ENCODE measurements at regions of chr3 and their contacts with region 1.

Region 1: DNA sequence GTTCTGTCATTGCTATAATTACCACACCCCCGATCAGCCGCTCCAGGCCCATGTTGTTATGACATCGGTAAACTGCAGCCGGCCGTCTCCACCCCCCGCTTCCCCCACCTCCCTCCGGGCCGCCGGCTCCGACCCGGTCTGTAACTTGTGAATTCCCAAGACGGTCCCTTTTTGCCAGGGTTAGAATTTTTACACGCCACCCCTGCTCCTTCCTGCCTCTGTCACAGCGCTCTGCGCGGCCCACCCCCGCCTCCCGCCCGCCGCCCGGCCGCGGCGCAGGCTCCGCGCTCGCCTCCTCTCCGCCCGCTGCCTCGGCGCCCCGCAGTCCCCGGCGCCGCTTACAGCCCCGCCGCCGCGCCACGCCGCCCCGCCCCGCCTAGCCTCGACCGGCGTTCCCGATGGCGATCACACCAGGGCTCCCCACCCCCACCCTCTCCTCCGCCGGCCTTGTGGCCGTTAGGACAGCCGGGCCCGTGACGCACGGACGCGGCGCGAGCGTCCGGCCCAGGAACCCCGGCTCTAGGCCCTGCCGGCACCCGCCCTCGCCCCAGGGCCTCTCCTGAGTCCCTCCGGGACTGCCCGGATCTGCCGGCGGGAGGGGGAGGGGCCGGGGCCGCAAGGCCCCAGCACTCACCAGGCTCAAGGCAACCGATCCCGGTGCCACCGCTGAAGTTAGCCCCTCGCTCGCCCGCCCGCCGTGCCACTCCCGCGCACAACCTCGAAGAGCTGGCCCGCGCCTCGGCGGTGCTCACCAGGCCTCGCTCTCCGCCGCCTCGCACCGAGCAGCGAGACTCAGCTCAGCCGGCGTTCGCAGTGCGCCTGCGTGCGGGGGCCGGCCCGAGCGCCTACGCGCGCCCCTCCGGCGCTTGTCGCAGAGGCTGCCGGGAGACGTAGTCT is at the start of gene KPNA1:
- DNase-seq: peak; percentile 88
- H3K4me3 ChIP-seq: peak within 1 kb of the TSS; percentile 81 to 87 (median 82)
- H3K27ac ChIP-seq: peak within 1 kb of the TSS; percentile 75
- H3K4me1 ChIP-seq: peaks cover 10% of the 10 kb centered on the region
- H3K27me3 ChIP-seq: no peaks in the 10 kb centered on the region
- CTCF ChIP-seq: no peak
- total RNA-seq, gene KPNA1: 70.0 to 95.3 TPM

Region 2: GRCh38 chr3:122484985-122485384 is 29.4 kb before region 1 on chr3:
- CTCF ChIA-PET with region 1: no interaction called
- dilution Hi-C with region 1: no loop called
- in situ Hi-C with region 1: no loop called
- intact Hi-C with region 1: loop called (anchors 2 kb)
- DNase-seq: peak; percentile 57
- H3K4me3 ChIP-seq: no peak overlapping the region
- H3K27ac ChIP-seq: peak overlapping the region; percentile 6
- H3K4me1 ChIP-seq: peaks cover 21% of the 10 kb centered on the region
- H3K27me3 ChIP-seq: no peaks in the 10 kb centered on the region
- CTCF ChIP-seq: no peak

Region 3: DNA sequence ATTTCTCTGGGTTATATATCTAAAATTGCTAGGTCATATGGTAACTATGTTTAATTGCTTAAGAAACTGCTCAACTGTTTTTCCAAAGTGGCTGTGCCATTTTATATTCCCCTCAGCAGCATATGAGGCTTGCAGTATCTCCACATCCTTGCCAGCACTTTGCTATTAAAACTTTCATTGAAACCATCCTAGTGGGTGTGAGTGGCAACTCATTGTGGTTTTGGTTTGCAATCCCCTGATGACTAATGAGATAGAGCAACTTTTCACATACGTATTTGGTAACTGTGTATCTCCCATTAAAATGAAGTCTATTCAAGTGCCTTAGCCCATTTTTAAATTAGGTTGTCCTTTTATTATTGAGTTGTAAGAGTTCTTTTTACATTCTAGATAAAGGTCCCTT is 16.9 kb before region 1 on chr3:
- CTCF ChIA-PET with region 1: no interaction called
- dilution Hi-C with region 1: no loop called
- in situ Hi-C with region 1: no loop called
- intact Hi-C with region 1: loop called (anchors 2 kb)
- DNase-seq: peak; percentile 95
- H3K4me3 ChIP-seq: no peak overlapping the region
- H3K27ac ChIP-seq: peak overlapping the region; percentile 72
- H3K4me1 ChIP-seq: peaks cover 38% of the 10 kb centered on the region
- H3K27me3 ChIP-seq: no peaks in the 10 kb centered on the region
- CTCF ChIP-seq: no peak

Region 4: DNA sequence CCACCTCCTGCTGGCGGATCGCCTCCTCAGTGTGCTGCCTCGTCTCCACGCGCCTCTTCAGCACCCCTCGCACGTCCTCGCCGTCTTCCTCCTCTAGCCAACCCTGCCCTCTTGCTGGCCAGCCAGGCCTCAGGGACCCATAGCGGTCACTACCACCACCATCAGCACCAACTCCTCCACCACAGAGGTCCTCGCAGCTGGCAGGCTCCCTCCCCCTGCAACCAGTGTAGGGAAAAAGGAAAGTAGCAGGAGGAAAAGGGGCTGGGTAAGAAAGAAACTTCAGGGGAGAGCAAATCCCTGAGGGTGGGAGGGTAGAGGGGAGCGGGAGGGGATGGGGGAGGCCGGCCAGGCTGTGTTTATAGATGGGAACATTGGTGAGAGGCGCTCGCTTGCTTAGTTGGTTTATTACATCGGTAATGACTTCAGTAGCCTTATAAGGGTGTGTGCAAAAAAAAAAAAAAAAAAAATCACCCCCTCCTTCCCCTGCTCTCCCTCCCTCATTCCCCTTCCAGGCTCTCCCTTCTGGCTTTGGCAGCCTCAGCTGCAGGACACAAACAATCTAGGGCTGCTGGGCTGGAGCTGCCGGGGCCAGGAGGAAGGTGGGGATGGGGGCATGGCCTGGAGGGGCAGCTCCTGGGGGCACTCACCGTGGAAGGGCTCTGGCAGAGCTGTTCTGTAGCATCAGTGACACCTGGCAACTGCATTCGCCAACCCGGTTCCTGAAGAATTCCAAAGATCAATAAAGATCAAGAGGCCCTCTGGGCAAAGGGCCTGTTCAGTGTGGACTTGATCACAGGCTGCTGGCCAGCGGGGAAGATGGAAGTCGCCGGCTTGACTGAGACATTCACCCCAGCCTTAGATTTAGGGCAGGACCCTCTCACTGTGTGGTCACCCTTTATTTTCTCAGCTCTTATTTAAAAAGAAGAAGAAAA is 1186.7 kb after region 1 on chr3:
- CTCF ChIA-PET with region 1: no interaction called
- dilution Hi-C with region 1: no loop called
- in situ Hi-C with region 1: no loop called
- intact Hi-C with region 1: no loop called
- DNase-seq: no peak
- H3K4me3 ChIP-seq: no peak overlapping the region
- H3K27ac ChIP-seq: no peak overlapping the region
- H3K4me1 ChIP-seq: no peaks in the 10 kb centered on the region
- H3K27me3 ChIP-seq: no peaks in the 10 kb centered on the region
- CTCF ChIP-seq: no peak

Measured in mammary epithelial cell (primary cell).